Ascending aorta (tissue), 2 donors: ENCODE measurements at regions of chr3 and their contacts with region 1.

Region 1: DNA sequence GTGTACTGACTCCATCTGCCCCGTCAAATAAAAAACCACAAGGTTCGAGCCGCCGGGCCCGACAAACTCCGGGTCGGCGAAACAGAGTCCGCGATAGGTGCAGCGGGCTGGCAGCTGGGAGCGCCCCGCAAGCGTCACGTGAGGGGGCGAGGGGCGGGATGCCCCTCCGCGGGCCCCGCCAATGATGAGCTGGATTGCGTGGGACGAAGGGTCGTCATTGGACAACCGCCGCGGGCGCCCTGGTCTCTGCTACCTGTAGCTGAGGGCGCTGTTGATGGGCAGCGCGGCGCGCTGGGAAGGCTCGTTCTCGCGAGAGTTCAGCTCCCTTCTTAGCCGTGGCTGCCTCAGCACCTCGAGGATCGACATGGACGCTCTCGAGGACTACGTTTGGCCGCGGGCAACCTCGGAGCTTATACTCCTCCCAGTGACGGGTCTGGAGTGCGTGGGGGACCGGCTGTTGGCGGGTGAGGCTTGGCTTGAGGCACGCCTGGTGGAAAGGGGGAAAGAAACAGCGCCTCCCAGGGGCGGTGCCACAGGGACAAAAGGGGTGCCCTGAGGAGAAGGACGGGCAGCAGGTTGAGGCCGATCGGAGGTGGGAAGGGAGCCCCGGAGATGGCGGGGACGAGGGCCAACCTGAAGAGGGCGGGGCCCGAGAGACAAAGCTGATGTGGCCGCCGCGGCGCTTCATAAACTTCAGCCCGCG is at the start of gene WDR6:
- DNase-seq: peak; percentile 96 to 99
- H3K4me3 ChIP-seq: peak within 1 kb of the TSS; percentile 77 to 80
- H3K27ac ChIP-seq: peak within 1 kb of the TSS; percentile 96
- H3K4me1 ChIP-seq: peaks cover 2 to 13% of the 10 kb centered on the region in 2 donors
- H3K27me3 ChIP-seq: no peaks in the 10 kb centered on the region
- CTCF ChIP-seq: peak; percentile 17 to 61 (median 25)
- total RNA-seq, gene WDR6: 115 TPM

Region 2: GRCh38 chr3:47082519-47082918 is 1924.7 kb before region 1 on chr3:
- intact Hi-C with region 1: no loop called
- DNase-seq: no peak
- H3K4me3 ChIP-seq: no peak overlapping the region
- H3K27ac ChIP-seq: no peak overlapping the region
- H3K4me1 ChIP-seq: no peaks in the 10 kb centered on the region
- H3K27me3 ChIP-seq: no peaks in the 10 kb centered on the region
- CTCF ChIP-seq: no peak

Region 3: GRCh38 chr3:48898383-48899234 is 108.6 kb before region 1 on chr3 and contains the start of gene SLC25A20:
- intact Hi-C with region 1: loop called (anchors 1 kb)
- DNase-seq: peak; percentile 51 to 95
- H3K4me3 ChIP-seq: peak within 1 kb of the TSS; percentile 74 to 80
- H3K27ac ChIP-seq: peak within 1 kb of the TSS; percentile 56 to 86
- H3K4me1 ChIP-seq: peaks cover 5 to 13% of the 10 kb centered on the region in 2 donors
- H3K27me3 ChIP-seq: no peaks in the 10 kb centered on the region
- CTCF ChIP-seq: no peak
- total RNA-seq, gene SLC25A20: 14.4 TPM

Region 4: DNA sequence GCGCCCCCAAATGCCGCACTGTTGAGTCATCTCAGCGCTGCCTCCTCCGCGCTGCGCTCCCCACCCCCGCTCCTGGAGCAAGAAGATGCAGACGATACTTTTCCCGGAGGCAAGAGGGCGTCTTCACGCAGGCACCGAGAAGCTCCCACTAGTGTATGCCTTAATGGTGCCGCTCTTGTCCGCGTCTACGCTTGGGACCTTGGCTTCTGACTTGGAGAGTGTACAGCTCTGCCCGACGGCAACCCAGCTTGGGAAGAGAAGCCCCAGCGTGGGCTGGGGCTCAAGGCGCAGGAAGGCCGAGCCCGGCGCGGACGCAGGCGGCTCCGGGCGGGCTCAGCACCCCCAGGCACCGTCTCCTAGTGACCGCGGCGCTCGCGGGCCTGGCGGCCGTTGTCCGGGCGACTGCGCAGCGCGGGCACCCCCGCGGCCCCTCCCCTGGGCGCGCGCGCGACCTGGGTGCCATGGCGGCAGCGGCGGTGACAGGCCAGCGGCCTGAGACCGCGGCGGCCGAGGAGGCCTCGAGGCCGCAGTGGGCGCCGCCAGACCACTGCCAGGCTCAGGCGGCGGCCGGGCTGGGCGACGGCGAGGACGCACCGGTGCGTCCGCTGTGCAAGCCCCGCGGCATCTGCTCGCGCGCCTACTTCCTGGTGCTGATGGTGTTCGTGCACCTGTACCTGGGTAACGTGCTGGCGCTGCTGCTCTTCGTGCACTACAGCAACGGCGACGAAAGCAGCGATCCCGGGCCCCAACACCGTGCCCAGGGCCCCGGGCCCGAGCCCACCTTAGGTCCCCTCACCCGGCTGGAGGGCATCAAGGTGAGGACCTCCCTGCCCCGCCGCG is 17.2 kb before region 1 on chr3 and contains the start of gene P4HTM:
- intact Hi-C with region 1: loop called (anchors 1 kb)
- DNase-seq: peak; percentile 46 to 96
- H3K4me3 ChIP-seq: peak within 1 kb of the TSS; percentile 80 to 99
- H3K27ac ChIP-seq: peak within 1 kb of the TSS; percentile 92 to 97
- H3K4me1 ChIP-seq: peaks cover 10 to 26% of the 10 kb centered on the region in 2 donors
- H3K27me3 ChIP-seq: no peaks in the 10 kb centered on the region
- CTCF ChIP-seq: peak in 2 of 3 experiments; percentile 35 to 45
- total RNA-seq, gene P4HTM: 71.9 TPM

Region 5: GRCh38 chr3:49093853-49094767 is 86.9 kb after region 1 on chr3 and contains the start of gene QRICH1:
- intact Hi-C with region 1: loop called (anchors 1 kb)
- DNase-seq: peak; percentile 94 to 99
- H3K4me3 ChIP-seq: peak within 1 kb of the TSS; percentile 97 to 98
- H3K27ac ChIP-seq: peak within 1 kb of the TSS; percentile 94 to 97
- H3K4me1 ChIP-seq: peaks cover 0 to 26% of the 10 kb centered on the region in 2 donors
- H3K27me3 ChIP-seq: no peaks in the 10 kb centered on the region
- CTCF ChIP-seq: peak; percentile 50 to 62 (median 60)
- total RNA-seq, gene QRICH1: 129 TPM

Region 6: GRCh38 chr3:49411968-49412631 is 404.9 kb after region 1 on chr3 and contains the starts of genes RHOA and TCTA:
- intact Hi-C with region 1: loop called (anchors 5 kb)
- DNase-seq: peak; percentile 100
- H3K4me3 ChIP-seq: peak within 1 kb of the TSS; percentile 80 to 97
- H3K27ac ChIP-seq: peak within 1 kb of the TSS; percentile 97 to 99
- H3K4me1 ChIP-seq: peaks cover 0 to 40% of the 10 kb centered on the region in 2 donors
- H3K27me3 ChIP-seq: no peaks in the 10 kb centered on the region
- CTCF ChIP-seq: no peak
- total RNA-seq, gene RHOA: 426 TPM
- total RNA-seq, gene TCTA: 51.5 TPM